GM12878 (cell line): ENCODE measurements at regions of chr14 and their contacts with region 1.

Region 1: DNA sequence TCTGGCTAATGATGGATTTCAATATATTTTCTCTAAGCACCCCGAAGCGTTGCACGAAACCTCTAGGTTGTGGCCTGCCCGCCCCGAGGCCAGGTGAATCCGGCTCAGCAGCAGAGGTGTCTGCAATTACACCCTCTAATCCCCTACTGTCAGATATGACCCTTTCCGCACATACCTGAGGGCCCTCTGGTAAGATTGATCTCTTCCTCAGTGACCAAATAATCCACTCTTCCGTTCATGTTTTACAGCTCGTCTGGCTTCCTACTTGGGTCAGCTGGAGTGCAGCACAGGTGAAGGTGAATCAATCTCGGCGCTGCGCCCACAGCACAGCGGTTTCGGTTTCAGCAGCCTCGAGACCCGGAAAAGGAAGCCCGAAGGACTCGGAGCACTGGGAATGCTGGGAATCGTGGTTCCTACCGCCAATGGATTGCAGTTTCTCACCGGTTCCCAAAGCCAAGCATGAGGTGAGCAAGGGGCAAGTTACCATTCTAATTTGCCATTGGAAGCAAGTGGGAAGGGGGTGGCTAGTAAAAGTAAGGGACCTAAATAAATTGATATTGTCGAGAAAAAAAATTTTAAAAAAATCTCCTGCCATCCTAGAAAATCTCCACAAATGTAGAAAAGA is at the start of gene SYNJ2BP:
- DNase-seq: peak; percentile 44
- ATAC-seq: peak; percentile 87
- H3K4me3 ChIP-seq: peak within 1 kb of the TSS; percentile 86
- H3K27ac ChIP-seq: peak within 1 kb of the TSS; percentile 13; the same call in 1 of the 2 replicates
- H3K4me1 ChIP-seq: no peaks in the 10 kb centered on the region
- H3K27me3 ChIP-seq: no peaks in the 10 kb centered on the region
- CTCF ChIP-seq: no peak
- EP300 ChIP-seq: no peak
- POLR2A ChIP-seq: peak; percentile 45
- RAD21 ChIP-seq: no peak
- polyA plus RNA-seq, gene SYNJ2BP: 17.7 to 27.5 TPM

Region 2: DNA sequence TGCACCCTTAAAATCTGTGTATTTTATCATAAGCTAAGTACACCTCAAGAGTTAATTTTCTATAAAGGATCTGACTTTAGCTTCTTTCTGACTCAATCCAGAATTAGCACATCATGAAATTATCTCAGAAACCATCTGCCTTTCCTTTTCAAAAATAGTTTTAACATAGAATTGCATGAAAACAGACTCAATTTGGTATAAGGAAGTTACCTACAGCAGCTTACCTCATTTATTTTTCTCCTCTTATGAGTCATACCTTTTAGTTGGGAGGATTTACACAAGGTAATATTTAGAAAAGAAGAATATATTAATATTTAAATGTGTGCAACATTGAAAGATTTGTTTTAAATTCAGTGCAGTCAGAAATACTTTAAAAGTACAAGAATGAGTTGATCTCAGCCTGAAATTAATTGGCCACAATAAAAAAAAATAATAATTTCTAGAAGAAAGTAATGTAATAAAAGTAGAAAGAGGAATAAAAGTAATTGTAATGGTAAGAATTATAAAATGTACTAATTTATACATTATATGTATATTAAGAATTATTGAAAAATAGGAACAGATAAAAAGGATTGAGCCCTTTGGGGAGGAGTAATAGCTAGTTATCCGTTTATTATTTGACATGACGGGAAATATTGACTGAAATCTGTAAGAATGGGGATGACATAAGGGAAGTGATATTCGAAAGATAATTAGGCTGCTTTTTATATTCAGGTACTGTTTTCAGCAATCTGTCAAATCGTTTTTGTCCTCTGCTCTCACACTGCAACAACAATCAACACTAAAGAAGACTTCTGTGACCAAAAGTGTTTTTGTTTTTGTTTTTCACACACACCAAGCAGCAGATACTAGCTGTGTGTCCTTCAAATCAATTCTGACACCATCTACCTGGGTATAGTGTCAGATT is 55.7 kb after region 1 on chr14:
- CTCF ChIA-PET with region 1: no interaction called
- POLR2A ChIA-PET with region 1: no interaction called
- RAD21 ChIA-PET with region 1: interaction called, 4 read pairs
- SMC1A ChIA-PET with region 1: interaction called, 3 read pairs
- in situ Hi-C with region 1: no loop called
- intact Hi-C with region 1: loop called (anchors 5 kb)
- DNase-seq: peak; percentile 20
- ATAC-seq: peak; percentile 80
- H3K4me3 ChIP-seq: no peak overlapping the region
- H3K27ac ChIP-seq: no peak overlapping the region
- H3K4me1 ChIP-seq: peaks cover 4% of the 10 kb centered on the region; the same call in 1 of the 2 replicates
- H3K27me3 ChIP-seq: no peaks in the 10 kb centered on the region
- CTCF ChIP-seq: no peak
- EP300 ChIP-seq: peak; percentile 61 to 76; a peak in 3 of 4 replicates
- POLR2A ChIP-seq: no peak
- RAD21 ChIP-seq: no peak